ENCODE measurements at regions of chr2 and their contacts with region 1.

Region 1: DNA sequence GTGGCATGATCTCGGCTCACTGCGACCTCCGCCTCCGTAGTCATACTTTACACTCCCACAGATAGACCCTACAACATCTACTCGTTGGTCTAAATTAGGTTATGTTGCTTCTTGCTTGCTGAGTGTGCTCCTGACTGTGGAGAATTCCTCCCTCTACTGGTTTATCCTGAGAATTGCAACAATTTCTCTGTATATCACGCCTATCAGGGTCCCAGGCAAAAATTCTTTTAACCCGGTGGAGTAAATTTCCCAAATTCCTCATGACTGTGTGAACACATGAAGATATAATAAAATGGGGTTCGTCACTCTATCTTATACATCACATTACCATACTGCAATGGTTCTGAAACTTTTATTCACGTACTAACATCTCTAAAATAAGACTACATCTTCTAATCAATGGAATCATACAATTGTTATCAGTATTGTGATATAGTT is 156.7 kb downstream of the EVA1A start:
- DNase-seq: no peak
- H3K4me3 ChIP-seq: no peak overlapping the region
- H3K27ac ChIP-seq: no peak overlapping the region
- H3K4me1 ChIP-seq: no peaks in the 10 kb centered on the region
- H3K27me3 ChIP-seq: peaks cover 0 to 19% (median 0%) of the 10 kb centered on the region in 4 donors
- CTCF ChIP-seq: peak; percentile 57 to 74 (median 62)
- EP300 ChIP-seq: no peak
- POLR2A ChIP-seq: no peak

Region 2: DNA sequence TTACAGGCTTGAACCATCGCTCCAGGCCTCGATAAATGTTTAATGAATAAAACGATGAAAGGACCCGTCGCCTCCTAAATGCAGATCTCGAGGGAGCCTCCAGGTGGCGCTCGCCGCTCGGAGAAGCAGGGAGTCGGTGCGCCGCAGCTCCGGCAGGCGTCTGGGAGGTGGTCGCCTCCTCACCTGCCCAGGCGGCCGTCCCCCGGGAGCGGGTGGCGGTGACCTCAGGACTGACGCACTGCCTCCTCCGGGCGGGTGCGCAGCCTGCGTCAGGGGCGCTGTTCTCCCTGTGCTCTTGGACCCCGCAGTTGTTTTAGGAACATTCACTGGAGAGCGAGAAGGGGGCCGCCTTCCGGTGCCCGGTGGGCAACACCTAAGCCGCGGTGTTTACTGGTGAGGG is 484.2 kb before region 1 on chr2:
- intact Hi-C with region 1: loop called (anchors 2 kb)
- DNase-seq: no peak
- H3K4me3 ChIP-seq: peak overlapping the region; percentile 23 to 51 (median 35)
- H3K27ac ChIP-seq: no peak overlapping the region
- H3K4me1 ChIP-seq: peaks cover 6 to 7% (median 6%) of the 10 kb centered on the region in 4 donors
- H3K27me3 ChIP-seq: peaks cover 0 to 57% (median 0%) of the 10 kb centered on the region in 4 donors
- CTCF ChIP-seq: peak; percentile 70 to 91 (median 80)
- EP300 ChIP-seq: no peak
- POLR2A ChIP-seq: no peak